ENCODE measurements at regions of chr11 and their contacts with region 1.

Region 1: GRCh38 chr11:123511037-123511870 is 81.2 kb downstream of the GRAMD1B start:
- DNase-seq: peak; percentile 81
- H3K4me3 ChIP-seq: no peak overlapping the region
- H3K27ac ChIP-seq: no peak overlapping the region
- H3K4me1 ChIP-seq: no peaks in the 10 kb centered on the region
- CTCF ChIP-seq: peak; percentile 96

Region 2: DNA sequence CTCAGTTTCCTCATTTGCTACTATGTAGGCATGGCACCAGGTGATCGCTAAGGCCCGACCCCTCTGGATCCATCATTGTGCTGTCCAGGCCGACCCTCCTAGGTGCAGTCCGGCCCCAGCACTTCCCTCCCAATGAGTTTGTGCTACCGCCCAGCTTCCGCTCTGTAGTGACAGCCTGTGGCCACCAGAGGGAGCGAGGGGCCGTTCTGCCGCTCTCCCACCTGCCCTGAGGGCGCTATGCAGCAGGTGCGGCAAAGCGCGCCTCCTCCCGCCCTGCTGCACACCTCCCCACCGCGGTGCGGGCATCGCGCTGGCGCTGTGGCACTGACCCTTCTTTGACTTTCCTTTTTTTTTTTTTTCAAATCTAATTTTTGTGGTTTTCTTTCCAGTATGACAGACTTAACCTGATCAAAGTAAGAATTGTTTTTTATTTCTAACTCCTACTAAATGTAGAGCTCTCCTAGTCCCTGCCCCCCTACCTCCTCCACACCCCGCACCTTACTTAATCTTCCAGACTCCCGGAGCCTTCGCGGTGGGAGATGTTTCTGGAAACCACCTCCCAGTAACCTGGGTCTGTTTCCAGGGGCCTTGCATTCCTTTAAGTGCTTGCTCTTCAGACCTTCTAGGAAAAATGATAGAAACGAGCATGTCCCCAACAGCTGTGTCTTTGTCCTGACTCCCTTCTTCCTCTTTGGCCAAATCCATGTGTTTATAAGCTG is 69.5 kb after region 1 on chr11:
- CTCF ChIA-PET with region 1: no interaction called
- POLR2A ChIA-PET with region 1: no interaction called
- intact Hi-C with region 1: loop called (anchors 1 kb)
- DNase-seq: peak; percentile 63
- H3K4me3 ChIP-seq: no peak overlapping the region
- H3K27ac ChIP-seq: no peak overlapping the region
- H3K4me1 ChIP-seq: no peaks in the 10 kb centered on the region
- CTCF ChIP-seq: peak; percentile 87